Activated T-helper 1 cell treated with anti-CD3 and anti-CD28 coated beads, Interleukin-12 subunit alpha, Interleukin-12 subunit beta, Interleukin-2, Interleukin-4 antibody, amounts not matched to agents 30 ng/mL and 10 ng/mL and 1 ng/mL, durations not matched to agents 14 hours and 24 hours and 36 hours (primary cell): ENCODE measurements at regions of chr1 and their contacts with region 1.

Region 1: GRCh38 chr1:109739738-109740660 is 839 bp downstream of the GSTM3 start:
- DNase-seq: peak; percentile 79
- H3K4me3 Mint-ChIP-seq: peak overlapping the region; percentile 77
- H3K27ac Mint-ChIP-seq: peak overlapping the region; percentile 47
- H3K4me1 Mint-ChIP-seq: peaks cover 14% of the 10 kb centered on the region
- H3K27me3 Mint-ChIP-seq: peaks cover 27% of the 10 kb centered on the region

Region 2: GRCh38 chr1:109483672-109484518 is 256.1 kb before region 1 on chr1 and contains the start of gene ATXN7L2:
- intact Hi-C with region 1: loop called (anchors 2 kb)
- DNase-seq: peak; percentile 87
- H3K4me3 Mint-ChIP-seq: peak within 1 kb of the TSS; percentile 95
- H3K27ac Mint-ChIP-seq: peak within 1 kb of the TSS; percentile 96
- H3K4me1 Mint-ChIP-seq: peaks cover 35% of the 10 kb centered on the region
- H3K27me3 Mint-ChIP-seq: peaks cover 13% of the 10 kb centered on the region
- total RNA-seq, gene ATXN7L2: 17.4 and 18.0 TPM in 2 replicates

Region 3: DNA sequence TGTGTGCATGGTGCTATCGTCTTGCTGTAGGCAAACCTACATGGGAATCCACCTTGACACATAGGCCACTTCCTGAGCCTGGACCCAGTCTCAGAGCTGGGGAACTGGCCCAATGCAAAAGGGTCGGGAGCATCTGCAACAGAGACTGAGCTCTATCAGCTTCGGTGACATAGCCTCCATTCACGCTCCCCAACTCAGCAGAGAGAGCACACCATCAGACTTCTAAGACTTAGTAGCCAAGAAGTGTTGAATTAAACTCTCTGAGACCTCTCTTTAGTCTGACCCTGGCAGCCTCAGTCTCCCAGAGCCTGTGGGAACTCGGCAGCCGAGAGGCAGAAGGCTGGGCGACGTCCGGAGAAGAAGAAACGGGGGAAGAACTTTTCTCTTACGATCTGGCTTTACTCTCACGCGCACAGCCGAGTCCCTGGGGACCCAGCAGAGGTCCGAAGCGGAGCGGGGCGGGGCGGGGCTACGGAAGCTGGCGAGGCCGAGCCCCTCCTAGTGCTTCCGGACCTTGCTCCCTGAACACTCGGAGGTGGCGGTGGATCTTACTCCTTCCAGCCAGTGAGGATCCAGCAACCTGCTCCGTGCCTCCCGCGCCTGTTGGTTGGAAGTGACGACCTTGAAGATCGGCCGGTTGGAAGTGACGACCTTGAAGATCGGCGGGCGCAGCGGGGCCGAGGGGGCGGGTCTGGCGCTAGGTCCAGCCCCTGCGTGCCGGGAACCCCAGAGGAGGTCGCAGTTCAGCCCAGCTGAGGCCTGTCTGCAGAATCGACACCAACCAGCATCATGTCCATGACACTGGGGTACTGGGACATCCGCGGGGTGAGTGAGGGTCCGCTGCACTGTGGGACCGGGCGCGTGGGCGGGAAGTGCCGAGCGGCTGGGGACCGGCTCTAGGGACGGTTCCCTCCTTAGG is 84.1 kb before region 1 on chr1 and contains the start of gene GSTM4:
- intact Hi-C with region 1: loop called (anchors 1 kb)
- DNase-seq: peak; percentile 56
- H3K4me3 Mint-ChIP-seq: peak within 1 kb of the TSS; percentile 95
- H3K27ac Mint-ChIP-seq: peak within 1 kb of the TSS; percentile 92
- H3K4me1 Mint-ChIP-seq: peaks cover 15% of the 10 kb centered on the region
- H3K27me3 Mint-ChIP-seq: peaks cover 19% of the 10 kb centered on the region
- total RNA-seq, gene GSTM4: 6.5 and 8.9 TPM in 2 replicates

Region 4: DNA sequence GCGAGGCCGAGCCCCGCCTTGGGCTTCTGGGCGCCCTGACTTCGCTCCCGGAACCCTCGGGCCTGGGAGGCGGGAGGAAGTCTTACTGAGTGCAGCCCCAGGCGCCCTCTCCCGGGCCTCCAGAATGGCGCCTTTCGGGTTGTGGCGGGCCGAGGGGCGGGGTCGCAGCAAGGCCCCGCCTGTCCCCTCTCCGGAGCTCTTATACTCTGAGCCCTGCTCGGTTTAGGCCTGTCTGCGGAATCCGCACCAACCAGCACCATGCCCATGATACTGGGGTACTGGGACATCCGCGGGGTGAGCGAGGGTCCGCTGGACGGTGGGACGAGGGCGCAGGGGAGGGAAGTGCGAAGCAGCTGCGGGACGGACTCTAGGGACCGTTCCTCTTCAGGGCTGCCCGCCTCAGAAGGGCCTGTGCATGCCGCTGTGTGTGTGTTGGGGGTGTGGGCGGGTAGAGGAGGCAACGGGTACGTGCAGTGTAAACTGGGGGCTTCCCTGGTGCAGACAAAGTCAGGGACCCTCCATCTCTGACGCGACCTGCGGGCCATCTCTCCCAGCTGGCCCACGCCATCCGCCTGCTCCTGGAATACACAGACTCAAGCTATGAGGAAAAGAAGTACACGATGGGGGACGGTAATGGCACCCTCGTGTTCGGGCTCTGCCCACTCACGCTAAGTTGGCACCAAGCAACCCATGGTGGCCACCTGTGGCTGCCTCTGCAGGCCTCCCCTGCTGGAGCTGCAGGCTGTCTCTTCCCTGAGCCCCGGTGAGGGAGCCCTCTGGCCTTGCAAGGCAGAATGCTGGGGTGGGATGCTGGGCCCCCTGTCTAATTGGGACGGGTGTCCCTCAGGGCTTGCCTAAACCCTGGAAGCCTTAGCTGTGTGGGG is 52.1 kb before region 1 on chr1 and contains the start of gene GSTM1:
- intact Hi-C with region 1: loop called (anchors 5 kb)
- DNase-seq: peak; percentile 86
- H3K4me3 Mint-ChIP-seq: peak within 1 kb of the TSS; percentile 93
- H3K27ac Mint-ChIP-seq: peak within 1 kb of the TSS; percentile 98
- H3K4me1 Mint-ChIP-seq: peaks cover 20% of the 10 kb centered on the region
- H3K27me3 Mint-ChIP-seq: peaks cover 4% of the 10 kb centered on the region
- total RNA-seq, gene GSTM1: 77.4 and 86.4 TPM in 2 replicates